ENCODE measurements at regions of chr1 and their contacts with region 1.

Region 1: GRCh38 chr1:153510984-153511410 is 24.8 kb downstream of the S100A6 start:
- DNase-seq: peak; percentile 72
- H3K4me3 ChIP-seq: no peak overlapping the region
- H3K27ac ChIP-seq: no peak overlapping the region
- H3K4me1 ChIP-seq: no peaks in the 10 kb centered on the region
- H3K27me3 ChIP-seq: no peaks in the 10 kb centered on the region
- CTCF ChIP-seq: peak; percentile 62 to 94 (median 80)
- POLR2A ChIP-seq: no peak

Region 2: DNA sequence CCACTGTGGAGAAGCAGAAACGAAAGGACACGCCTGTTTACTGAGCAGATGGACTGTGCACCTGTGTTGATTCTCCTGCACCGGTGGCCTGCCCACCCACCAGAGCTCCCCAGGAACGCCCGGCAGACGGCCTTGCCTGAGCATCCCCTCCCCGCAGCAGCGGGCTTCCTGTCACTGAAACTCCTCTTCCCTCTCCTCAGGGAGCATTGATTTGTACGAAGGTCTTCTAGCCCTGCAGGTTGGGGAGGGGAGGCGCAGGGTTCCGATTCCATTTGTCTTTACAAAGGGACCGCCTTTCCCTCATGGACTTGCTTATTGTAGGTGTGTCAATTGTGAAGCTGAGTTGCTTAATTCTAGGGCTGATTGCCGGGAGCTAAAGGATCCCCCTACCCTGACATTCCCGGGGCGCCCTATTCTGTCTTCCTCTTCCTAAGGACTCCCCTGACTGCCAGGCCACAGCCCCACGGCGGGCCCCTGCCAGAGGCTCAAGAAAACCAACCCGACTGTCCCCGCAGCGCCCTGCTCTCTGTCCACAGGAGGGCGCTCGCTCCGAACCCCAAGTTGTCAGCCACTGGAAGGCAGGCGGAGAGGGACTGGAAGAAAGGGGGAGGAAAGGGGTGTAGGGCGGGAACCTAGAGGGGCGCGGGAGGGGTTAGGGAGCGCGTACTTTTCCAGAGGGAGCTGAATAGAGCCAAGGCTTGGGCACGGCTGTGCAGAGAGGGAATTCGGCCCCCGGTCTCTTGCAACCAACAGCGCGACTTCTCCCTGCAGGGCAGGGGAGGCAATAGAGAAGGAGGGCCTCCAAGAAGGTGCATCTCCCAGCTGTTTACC is 22.0 kb after region 1 on chr1:
- intact Hi-C with region 1: loop called (anchors 2 kb)
- DNase-seq: peak; percentile 84
- H3K4me3 ChIP-seq: peak overlapping the region; percentile 21 to 74
- H3K27ac ChIP-seq: peak overlapping the region; percentile 92 to 96
- H3K4me1 ChIP-seq: peaks cover 3% of the 10 kb centered on the region
- H3K27me3 ChIP-seq: no peaks in the 10 kb centered on the region
- CTCF ChIP-seq: peak; percentile 59 to 93 (median 88)
- POLR2A ChIP-seq: peak; percentile 13